Breast epithelium (tissue), 4 donors: ENCODE measurements at regions of chr9 and their contacts with region 1.

Region 1: GRCh38 chr9:111114486-111114885 is 76.2 kb upstream of the LPAR1 start:
- DNase-seq: no peak
- H3K4me3 ChIP-seq: no peak overlapping the region
- H3K27ac ChIP-seq: no peak overlapping the region
- H3K4me1 ChIP-seq: no peaks in the 10 kb centered on the region
- H3K27me3 ChIP-seq: no peaks in the 10 kb centered on the region
- CTCF ChIP-seq: no peak
- POLR2A ChIP-seq: no peak

Region 2: DNA sequence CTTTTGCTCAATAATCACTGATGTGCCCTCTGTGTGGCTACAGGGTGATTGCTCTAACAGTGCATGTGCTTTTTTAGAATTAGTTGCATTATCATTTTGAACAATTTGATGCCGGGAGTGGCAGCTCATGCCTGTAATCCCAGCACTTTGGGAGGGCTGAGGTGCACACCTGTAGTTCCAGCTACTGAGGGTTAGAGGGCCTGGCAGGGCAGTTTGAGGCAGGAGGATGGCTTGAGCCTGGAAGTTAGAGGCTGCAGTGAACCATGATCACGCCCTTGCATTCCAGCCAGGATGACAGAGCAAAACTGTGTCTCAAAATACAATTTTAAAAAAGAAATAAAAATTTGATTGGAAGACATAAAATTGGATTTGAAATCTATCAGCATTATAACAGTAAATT is 885.5 kb before region 1 on chr9:
- intact Hi-C with region 1: no loop called
- DNase-seq: no peak
- H3K4me3 ChIP-seq: no peak overlapping the region
- H3K27ac ChIP-seq: no peak overlapping the region
- H3K4me1 ChIP-seq: no peaks in the 10 kb centered on the region
- H3K27me3 ChIP-seq: no peaks in the 10 kb centered on the region
- CTCF ChIP-seq: no peak
- POLR2A ChIP-seq: no peak

Region 3: GRCh38 chr9:110842169-110842568 is 272.3 kb before region 1 on chr9:
- intact Hi-C with region 1: no loop called
- DNase-seq: no peak
- H3K4me3 ChIP-seq: no peak overlapping the region
- H3K27ac ChIP-seq: no peak overlapping the region
- H3K4me1 ChIP-seq: no peaks in the 10 kb centered on the region
- H3K27me3 ChIP-seq: no peaks in the 10 kb centered on the region
- CTCF ChIP-seq: no peak
- POLR2A ChIP-seq: no peak

Region 4: DNA sequence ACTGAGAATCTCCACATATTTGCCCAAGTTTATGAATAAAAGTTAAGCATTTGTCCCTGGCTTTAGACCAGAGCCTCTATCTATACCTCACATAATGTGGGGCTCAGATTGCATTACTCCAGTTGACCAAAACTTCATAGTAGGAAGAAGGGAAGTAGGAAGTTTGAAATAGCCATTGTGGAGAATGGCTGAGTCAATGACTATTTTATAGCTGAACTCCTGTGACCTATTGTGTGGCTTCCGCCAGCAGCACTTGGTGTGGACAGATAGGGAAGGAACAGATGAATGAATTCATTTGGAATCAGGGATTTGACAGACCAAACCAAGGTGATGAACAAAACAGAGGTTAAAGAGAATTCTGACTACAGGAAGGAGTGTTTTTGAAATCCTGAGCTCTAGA is 16.7 kb after region 1 on chr9:
- intact Hi-C with region 1: loop called (anchors 2 kb)
- DNase-seq: no peak
- H3K4me3 ChIP-seq: no peak overlapping the region
- H3K27ac ChIP-seq: no peak overlapping the region
- H3K4me1 ChIP-seq: no peaks in the 10 kb centered on the region
- H3K27me3 ChIP-seq: no peaks in the 10 kb centered on the region
- CTCF ChIP-seq: no peak
- POLR2A ChIP-seq: no peak